ENCODE measurements at regions of chr2 and their contacts with region 1.

Region 1: DNA sequence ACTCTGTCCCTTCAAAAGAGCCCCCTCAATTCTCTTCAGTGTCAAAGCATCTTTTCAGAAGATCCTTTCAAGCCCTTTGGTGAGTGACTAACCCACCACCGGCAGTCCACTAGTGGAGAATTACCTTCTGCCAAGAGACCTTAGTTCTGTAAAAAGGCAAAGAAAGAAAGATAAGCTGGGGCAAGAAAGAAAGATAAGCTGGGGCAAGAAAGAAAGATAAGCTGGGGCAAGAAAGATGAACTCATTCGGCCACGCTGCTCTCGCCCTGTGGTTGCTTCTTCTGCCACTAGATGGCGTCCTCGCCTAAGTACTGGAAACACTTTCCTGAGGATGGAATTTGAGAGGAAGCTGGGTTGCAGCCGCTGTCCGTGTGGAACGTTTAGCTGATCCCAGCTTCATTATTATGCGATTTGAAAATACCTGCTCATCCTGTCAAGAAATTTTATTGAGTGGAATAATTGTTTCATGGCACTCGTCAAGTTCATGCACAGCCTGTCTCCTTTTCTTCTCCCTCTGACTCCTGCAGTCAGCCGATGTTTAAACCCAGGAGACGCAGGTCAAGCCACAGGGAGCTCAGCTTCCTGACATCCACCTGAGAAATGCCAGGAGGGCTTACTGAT is 17.3 kb upstream of the ANXA4 start:
- DNase-seq: no peak
- H3K4me3 ChIP-seq: peak overlapping the region; percentile 47
- CTCF ChIP-seq: peak; percentile 79

Region 2: GRCh38 chr2:69565431-69565839 is 159.2 kb before region 1 on chr2:
- CTCF ChIA-PET with region 1: interaction called, 16 read pairs
- POLR2A ChIA-PET with region 1: no interaction called
- DNase-seq: no peak
- H3K4me3 ChIP-seq: no peak overlapping the region
- CTCF ChIP-seq: peak; percentile 59

Region 3: GRCh38 chr2:69750246-69750645 is 25.6 kb after region 1 on chr2:
- CTCF ChIA-PET with region 1: interaction called, 33 read pairs
- POLR2A ChIA-PET with region 1: no interaction called
- DNase-seq: no peak
- H3K4me3 ChIP-seq: no peak overlapping the region
- CTCF ChIP-seq: no peak

Region 4: GRCh38 chr2:69789175-69789721 is 64.6 kb after region 1 on chr2:
- CTCF ChIA-PET with region 1: interaction called, 16 read pairs
- POLR2A ChIA-PET with region 1: no interaction called
- DNase-seq: peak; percentile 92
- H3K4me3 ChIP-seq: no peak overlapping the region
- CTCF ChIP-seq: no peak

Region 5: DNA sequence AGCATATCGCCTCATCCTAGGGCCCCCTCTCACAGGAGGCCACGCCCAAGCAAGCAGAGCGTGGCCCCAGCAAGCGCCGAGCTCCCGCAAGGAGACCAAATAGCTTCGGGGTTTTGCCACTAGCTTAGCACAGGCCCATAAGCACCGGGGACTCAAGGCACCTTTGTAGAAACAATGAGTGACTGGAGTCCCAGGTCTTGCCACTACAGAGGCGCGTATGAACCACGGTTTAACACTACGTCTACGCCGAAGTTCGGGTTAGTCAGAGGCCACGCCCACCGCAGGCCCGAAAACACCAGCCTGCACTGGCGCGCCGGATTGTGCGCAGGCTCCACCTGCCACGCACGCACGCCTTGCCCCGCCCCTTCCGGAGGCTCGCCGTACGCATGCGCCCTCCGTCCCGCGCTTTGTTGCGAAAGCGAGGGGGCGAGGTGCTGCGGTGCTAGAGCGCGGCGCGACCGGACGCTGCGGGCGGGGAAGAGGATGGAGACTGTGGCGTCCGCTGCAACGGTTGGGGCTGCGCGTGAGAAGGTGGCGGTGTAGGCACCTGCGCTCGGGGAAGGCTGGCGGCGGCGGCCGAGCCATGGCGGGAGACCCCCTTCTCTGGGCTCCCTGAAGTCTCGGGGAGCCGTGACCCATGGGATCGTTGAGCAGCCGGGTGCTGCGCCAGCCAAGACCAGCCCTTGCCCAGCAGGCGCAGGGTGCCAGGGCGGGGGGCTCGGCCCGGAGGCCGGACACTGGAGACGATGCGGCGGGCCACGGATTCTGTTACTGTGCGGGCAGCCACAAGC is 104.8 kb after region 1 on chr2 and contains the start of gene GMCL1:
- CTCF ChIA-PET with region 1: interaction called, 65 read pairs
- POLR2A ChIA-PET with region 1: no interaction called
- DNase-seq: peak; percentile 69
- H3K4me3 ChIP-seq: peak within 1 kb of the TSS; percentile 93
- CTCF ChIP-seq: no peak

Region 6: DNA sequence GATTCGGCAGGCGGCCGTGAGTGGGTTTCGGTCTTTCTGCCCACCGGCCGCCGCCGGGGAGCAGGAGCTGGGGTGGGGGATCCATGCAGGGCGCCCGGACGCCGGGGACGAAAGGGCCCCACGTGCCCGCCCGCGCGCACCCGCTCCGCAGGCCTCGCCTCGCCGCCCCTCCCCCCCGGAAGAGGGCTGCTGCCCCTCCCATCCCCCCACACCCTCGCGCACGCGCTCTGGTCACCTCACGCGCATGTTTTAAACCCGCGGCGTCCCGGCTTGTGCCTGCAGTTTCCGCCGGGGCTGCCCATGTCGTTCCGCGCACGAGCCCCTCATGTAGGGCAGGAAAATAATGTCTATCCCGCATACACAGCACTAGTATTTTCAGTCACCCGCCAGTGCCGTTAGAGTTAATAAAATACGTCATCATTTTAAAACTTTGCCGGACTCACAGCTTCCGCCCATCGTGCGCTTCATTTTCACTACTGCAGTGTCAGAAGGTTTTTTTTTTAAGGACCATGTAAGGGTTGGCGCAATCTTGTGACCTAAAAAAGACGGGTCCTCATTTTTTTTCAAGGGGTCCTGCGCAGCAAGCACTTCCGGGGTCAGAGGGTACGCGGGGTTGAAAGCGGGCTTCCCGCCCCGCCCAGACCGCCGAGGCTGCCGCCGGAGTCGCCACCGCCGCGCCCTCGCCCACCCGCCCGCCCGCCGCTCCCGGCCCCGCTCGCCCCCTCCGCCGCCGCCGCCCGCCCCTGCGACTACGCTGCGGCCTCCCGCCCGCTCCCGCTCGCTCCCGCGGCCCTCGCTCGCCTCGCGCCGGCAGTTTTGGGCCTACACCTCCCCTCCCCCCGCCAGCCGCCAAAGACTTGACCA is 362.4 kb after region 1 on chr2 and contains the start of gene PCBP1:
- CTCF ChIA-PET with region 1: no interaction called
- POLR2A ChIA-PET with region 1: no interaction called
- DNase-seq: peak; percentile 81
- H3K4me3 ChIP-seq: peak within 1 kb of the TSS; percentile 83
- CTCF ChIP-seq: no peak